OCI-LY7 (cell line): ENCODE measurements at regions of chr15 and their contacts with region 1.

Region 1: GRCh38 chr15:79896637-79897379 is at the start of gene MTHFS:
- DNase-seq: peak; percentile 85
- H3K4me3 ChIP-seq: peak within 1 kb of the TSS; percentile 80
- H3K27ac ChIP-seq: peak within 1 kb of the TSS; percentile 62
- H3K4me1 ChIP-seq: peaks cover 19% of the 10 kb centered on the region
- CTCF ChIP-seq: peak; percentile 69
- total RNA-seq, gene MTHFS: 12.4 and 16.4 TPM in 2 replicates

Region 2: DNA sequence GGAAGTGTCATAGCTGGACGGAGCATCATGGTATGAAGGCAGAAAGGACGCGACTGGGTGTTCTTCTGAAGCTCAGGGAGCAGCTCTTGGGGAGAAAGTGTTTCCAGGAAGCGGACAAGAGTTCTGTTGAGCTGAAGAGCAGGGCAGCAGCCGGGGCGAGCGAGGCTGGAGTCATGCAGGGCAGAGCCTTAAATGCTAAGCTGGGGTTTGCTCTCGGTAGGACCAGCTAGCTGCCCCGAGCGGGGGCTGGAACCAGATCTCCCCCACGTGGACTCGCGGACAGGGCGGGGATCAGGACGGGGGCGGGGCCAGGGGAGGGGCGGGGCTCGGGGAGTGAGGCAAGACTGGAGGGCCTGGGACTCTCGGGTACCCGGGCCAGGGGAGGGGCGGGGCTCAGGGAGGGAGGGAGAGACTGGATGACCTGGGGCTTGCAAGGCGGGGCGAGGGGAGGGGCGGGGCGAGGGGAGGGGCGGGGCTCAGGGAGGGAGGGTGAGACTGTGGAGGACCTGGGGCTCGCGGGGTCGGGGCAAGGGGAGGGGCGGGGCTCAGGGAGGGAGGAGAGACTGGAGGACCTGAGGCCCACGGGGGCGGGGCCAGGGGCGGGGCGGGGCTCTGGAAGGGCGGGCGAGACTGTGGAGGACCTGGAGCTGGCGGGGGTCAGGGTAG is 255.5 kb after region 1 on chr15:
- CTCF ChIA-PET with region 1: no interaction called
- POLR2A ChIA-PET with region 1: no interaction called
- intact Hi-C with region 1: loop called (anchors 10 kb)
- DNase-seq: peak; percentile 91
- H3K4me3 ChIP-seq: peak overlapping the region; percentile 73
- H3K27ac ChIP-seq: no peak overlapping the region
- H3K4me1 ChIP-seq: peaks cover 14% of the 10 kb centered on the region
- CTCF ChIP-seq: no peak

Region 3: GRCh38 chr15:80173022-80173759 is 276.4 kb after region 1 on chr15:
- CTCF ChIA-PET with region 1: no interaction called
- POLR2A ChIA-PET with region 1: no interaction called
- intact Hi-C with region 1: loop called (anchors 5 kb)
- DNase-seq: peak; percentile 79
- H3K4me3 ChIP-seq: no peak overlapping the region
- H3K27ac ChIP-seq: no peak overlapping the region
- H3K4me1 ChIP-seq: no peaks in the 10 kb centered on the region
- CTCF ChIP-seq: peak; percentile 83